Right lobe of liver (tissue), 6 donors: ENCODE measurements at regions of chr5 and their contacts with region 1.

Region 1: DNA sequence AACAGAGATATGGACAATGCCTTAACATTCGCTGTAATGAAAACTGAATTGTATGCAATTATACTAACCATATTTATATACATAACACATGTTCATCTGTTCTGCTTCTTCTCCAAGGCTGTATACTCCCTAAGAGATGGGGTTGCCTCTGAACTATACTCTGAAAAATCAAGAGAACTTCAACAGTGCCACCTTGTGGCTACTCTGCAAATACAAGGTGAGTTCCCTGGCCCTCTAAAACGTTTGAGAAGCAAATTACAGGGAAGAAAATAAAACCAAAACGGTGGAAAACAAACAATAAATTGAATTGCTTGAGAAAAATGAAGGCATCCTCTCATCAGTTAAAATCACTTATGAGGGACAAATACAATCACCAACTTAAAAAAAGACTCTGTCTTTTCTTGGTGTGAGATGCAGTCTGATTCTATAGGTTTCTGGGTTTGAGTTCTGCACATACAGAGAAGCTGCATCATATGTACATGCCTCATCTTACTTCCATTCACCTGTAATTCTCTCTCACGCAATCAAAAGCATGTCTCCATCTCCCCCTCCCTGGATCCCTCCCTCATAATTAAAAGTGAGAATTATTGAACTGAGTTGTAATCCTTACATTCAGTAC is 98.6 kb downstream of the FBXW11 start:
- DNase-seq: no peak
- ATAC-seq: peak; percentile 73 to 79 (median 79)
- H3K4me3 ChIP-seq: no peak overlapping the region
- H3K27ac ChIP-seq: no peak overlapping the region
- H3K4me1 ChIP-seq: peaks cover 0 to 5% (median 2%) of the 10 kb centered on the region in 4 donors
- H3K27me3 ChIP-seq: no peaks in the 10 kb centered on the region
- CTCF ChIP-seq: peak; percentile 73 to 85 (median 74)
- POLR2A ChIP-seq: no peak

Region 2: GRCh38 chr5:171418316-171418981 is 489.4 kb before region 1 on chr5:
- intact Hi-C with region 1: loop called in 1 of 2 experiments (anchors 10 kb)
- DNase-seq: peak; percentile 76 to 81 (median 80)
- ATAC-seq: peak; percentile 95 to 97 (median 96)
- H3K4me3 ChIP-seq: peak overlapping the region in 1 of 3 donors; percentile 37
- H3K27ac ChIP-seq: no peak overlapping the region
- H3K4me1 ChIP-seq: peaks cover 0 to 27% (median 10%) of the 10 kb centered on the region in 4 donors
- H3K27me3 ChIP-seq: peaks cover 0 to 10% of the 10 kb centered on the region in 2 donors
- CTCF ChIP-seq: peak; percentile 81 to 92 (median 86)
- POLR2A ChIP-seq: no peak

Region 3: DNA sequence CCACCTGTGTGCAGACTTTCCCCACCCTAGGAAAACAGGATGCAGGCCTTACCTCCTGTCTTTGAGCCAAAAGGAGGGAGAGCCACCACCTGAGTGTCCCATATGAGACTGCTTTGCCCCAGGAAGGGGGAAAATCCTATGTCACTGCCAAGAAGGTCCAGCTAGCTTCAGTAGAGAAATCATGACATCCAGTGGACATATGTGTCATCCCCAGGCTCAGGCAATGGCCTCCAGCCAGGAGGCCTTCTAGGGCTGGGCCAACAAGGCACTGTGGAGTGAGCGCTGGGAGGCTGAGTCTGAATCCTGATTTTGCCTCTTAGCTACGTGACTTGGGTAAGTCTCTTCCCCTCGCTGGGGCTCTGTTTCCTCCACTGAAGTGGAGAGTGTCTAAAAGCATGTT is 62.0 kb before region 1 on chr5:
- intact Hi-C with region 1: no loop called
- DNase-seq: no peak
- ATAC-seq: peak in 2 of 4 donors; percentile 42 to 63
- H3K4me3 ChIP-seq: no peak overlapping the region
- H3K27ac ChIP-seq: no peak overlapping the region
- H3K4me1 ChIP-seq: no peaks in the 10 kb centered on the region
- H3K27me3 ChIP-seq: no peaks in the 10 kb centered on the region
- CTCF ChIP-seq: peak in 2 of 4 donors; percentile 16 to 21
- POLR2A ChIP-seq: no peak